Psoas muscle (tissue), 8 donors: ENCODE measurements at regions of chr6 and their contacts with region 1.

Region 1: GRCh38 chr6:37971711-37972390 is 152.3 kb downstream of the ZFAND3 start:
- DNase-seq: no peak
- ATAC-seq: no peak
- H3K4me3 ChIP-seq: no peak overlapping the region
- H3K27ac ChIP-seq: no peak overlapping the region
- H3K4me1 ChIP-seq: no peaks in the 10 kb centered on the region
- H3K27me3 ChIP-seq: no peaks in the 10 kb centered on the region
- CTCF ChIP-seq: no peak

Region 2: GRCh38 chr6:37936906-37937305 is 34.9 kb before region 1 on chr6:
- intact Hi-C with region 1: loop called in 1 of 2 experiments (anchors 5 kb)
- DNase-seq: no peak
- ATAC-seq: no peak
- H3K4me3 ChIP-seq: no peak overlapping the region
- H3K27ac ChIP-seq: no peak overlapping the region
- H3K4me1 ChIP-seq: peaks cover 39% of the 10 kb centered on the region
- H3K27me3 ChIP-seq: no peaks in the 10 kb centered on the region
- CTCF ChIP-seq: no peak

Region 3: GRCh38 chr6:38997128-38997761 is 1025.4 kb after region 1 on chr6:
- intact Hi-C with region 1: no loop called
- DNase-seq: no peak
- ATAC-seq: no peak
- H3K4me3 ChIP-seq: no peak overlapping the region
- H3K27ac ChIP-seq: no peak overlapping the region
- H3K4me1 ChIP-seq: no peaks in the 10 kb centered on the region
- H3K27me3 ChIP-seq: peaks cover 4 to 38% (median 4%) of the 10 kb centered on the region in 3 donors
- CTCF ChIP-seq: peak; percentile 43